ENCODE measurements at regions of chr2 and their contacts with region 1.

Region 1: DNA sequence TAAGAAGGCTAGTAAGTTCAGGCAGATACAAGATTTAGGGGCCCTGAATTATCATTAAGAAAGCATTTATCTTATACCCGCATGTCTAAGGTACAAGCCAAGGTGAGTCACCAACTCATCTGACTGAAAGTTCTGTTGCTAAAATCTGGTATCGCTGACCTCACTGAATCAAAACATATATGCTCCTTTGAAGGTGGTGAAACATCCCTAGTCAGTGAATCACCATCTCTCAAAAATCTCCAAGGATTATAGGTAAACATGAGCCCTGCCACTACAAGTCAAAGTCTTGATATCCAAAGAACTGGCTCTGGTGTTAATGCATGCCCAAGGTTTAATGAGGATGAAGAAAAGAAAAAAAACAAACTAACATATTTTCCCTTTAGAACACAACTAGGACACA is 43.5 kb downstream of the IRS1 start:
- DNase-seq: no peak
- H3K4me3 Mint-ChIP-seq: no peak overlapping the region
- H3K27ac Mint-ChIP-seq: no peak overlapping the region
- H3K4me1 Mint-ChIP-seq: peaks cover 3% of the 10 kb centered on the region
- H3K27me3 Mint-ChIP-seq: peaks cover 2% of the 10 kb centered on the region

Region 2: GRCh38 chr2:226609366-226609765 is 146.8 kb before region 1 on chr2:
- CTCF ChIA-PET with region 1: no interaction called
- POLR2A ChIA-PET with region 1: no interaction called
- intact Hi-C with region 1: no loop called
- DNase-seq: no peak
- H3K4me3 Mint-ChIP-seq: no peak overlapping the region
- H3K27ac Mint-ChIP-seq: no peak overlapping the region
- H3K4me1 Mint-ChIP-seq: peaks cover 15% of the 10 kb centered on the region
- H3K27me3 Mint-ChIP-seq: no peaks in the 10 kb centered on the region

Region 3: DNA sequence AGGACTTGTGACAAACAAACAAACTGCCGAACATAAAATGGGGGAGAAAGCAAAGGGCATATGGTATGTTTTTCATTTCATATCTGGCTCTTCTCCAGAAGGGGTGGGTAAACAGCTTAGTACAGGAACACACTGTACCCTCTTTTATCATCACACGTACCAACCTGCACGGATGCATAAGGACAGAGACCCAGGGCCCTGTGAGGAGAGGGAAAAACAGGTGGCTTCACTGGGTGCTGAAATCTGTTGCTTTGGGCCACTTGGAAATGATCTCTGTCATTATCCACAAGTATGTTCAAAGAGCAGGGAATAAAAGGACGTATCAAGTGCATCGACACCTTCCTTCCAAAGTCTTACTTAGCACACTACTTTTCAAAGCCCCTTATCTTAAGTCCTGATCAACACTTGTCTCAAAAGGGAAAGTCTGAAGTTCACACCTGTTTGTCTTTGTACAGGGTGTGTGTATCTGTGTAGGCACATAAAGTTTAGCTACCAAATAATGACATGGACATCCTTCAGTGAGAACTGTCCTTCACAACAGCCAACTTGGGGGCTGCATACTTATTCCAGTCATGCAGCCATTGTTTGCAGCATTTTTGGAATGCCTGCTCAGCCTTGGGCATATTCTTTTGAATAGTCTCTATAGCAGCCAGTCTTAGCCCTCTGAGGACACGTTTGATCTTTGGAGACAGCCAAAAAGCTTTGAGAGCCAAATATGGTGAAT is 17.1 kb before region 1 on chr2:
- CTCF ChIA-PET with region 1: interaction called, 3 read pairs
- POLR2A ChIA-PET with region 1: no interaction called
- intact Hi-C with region 1: loop called (anchors 1 kb)
- DNase-seq: no peak
- H3K4me3 Mint-ChIP-seq: no peak overlapping the region
- H3K27ac Mint-ChIP-seq: no peak overlapping the region
- H3K4me1 Mint-ChIP-seq: peaks cover 3% of the 10 kb centered on the region
- H3K27me3 Mint-ChIP-seq: no peaks in the 10 kb centered on the region

Region 4: GRCh38 chr2:226772389-226773179 is 16.5 kb after region 1 on chr2:
- CTCF ChIA-PET with region 1: no interaction called
- POLR2A ChIA-PET with region 1: no interaction called
- intact Hi-C with region 1: no loop called
- DNase-seq: no peak
- H3K4me3 Mint-ChIP-seq: no peak overlapping the region
- H3K27ac Mint-ChIP-seq: no peak overlapping the region
- H3K4me1 Mint-ChIP-seq: peaks cover 16% of the 10 kb centered on the region
- H3K27me3 Mint-ChIP-seq: no peaks in the 10 kb centered on the region

Region 5: DNA sequence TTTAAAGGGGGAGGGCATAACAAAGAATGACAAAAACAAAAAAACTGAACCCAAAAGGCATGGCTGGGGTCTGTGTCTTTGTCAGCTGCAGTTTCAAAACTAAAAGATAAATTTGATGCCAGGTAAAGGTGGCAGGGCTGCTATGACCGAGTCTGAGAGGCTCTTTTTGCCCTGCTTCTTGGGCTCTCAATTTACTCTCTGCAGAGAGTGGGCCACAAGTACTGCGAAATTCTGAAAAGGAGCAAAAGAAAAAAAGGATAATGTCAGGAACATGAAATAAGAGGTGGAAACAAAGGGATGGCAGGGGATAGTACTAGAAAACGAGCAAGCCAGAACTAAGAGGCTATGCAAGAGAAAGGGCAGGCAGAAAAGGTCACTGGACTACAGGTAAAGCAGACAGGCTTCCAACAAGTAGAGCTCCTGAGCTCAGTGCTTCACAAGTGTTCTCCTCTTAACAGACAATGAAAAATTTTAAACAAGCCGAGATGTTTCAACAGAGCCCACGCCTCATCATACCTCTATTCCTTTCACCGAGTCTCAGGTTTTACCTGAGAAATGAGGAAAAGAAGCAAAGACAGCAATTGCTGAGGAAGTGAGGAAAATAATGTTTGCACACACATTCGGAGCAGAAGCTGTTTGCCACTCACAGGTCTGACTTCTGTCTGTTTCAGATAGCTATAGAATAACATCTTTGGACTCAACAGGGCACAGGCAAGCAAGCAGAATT is 36.2 kb after region 1 on chr2:
- CTCF ChIA-PET with region 1: no interaction called
- POLR2A ChIA-PET with region 1: no interaction called
- intact Hi-C with region 1: no loop called
- DNase-seq: no peak
- H3K4me3 Mint-ChIP-seq: peak overlapping the region; percentile 76
- H3K27ac Mint-ChIP-seq: peak overlapping the region; percentile 74
- H3K4me1 Mint-ChIP-seq: peaks cover 29% of the 10 kb centered on the region
- H3K27me3 Mint-ChIP-seq: no peaks in the 10 kb centered on the region

Measured in activated CD4-positive, alpha-beta memory T cell treated with anti-CD3 and anti-CD28 coated beads for 36 hours (primary cell).